ENCODE measurements at regions of chr20 and their contacts with region 1.

Region 1: DNA sequence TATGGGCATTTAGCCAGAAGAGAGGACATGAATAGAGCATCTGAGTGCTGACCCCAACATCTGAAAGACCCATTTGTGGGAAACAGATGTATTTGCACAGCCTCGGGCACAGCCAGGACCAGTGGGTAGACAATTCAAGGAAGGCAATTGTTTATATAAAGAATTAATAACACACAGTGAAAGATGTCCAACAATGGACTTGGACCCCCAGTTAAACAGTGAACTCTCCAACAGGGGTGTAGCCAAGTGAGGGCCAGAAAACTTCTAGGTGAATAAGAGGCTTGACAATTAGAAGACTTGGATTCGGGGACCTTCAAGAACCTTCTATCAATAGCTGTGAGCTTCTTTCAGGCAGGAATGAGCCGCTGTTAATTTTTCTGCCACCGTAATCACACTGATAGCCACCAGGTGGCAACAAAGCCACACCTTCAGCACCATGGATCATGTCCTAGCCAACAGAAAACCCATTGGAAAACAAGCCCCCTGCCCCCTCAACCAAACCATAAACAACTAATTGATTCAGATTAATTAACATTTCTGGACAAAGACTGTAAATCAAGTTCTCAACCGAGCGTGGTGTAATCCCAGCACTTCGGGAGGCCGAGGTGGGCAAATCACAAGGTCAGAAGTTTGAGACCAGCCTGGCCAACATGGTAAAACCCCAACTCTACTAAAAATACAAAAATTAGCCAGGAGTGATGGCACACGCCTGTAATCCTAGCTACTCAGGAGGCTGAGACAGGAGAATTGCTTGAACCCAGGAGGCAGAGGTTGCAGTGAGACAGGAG is 8.8 kb upstream of the SRSF6 start:
- DNase-seq: peak in 1 of 2 experiments; percentile 59
- H3K4me3 ChIP-seq: no peak overlapping the region
- H3K27ac ChIP-seq: no peak overlapping the region
- H3K4me1 ChIP-seq: no peaks in the 10 kb centered on the region
- H3K27me3 ChIP-seq: peaks cover 5% of the 10 kb centered on the region
- CTCF ChIP-seq: peak; percentile 92

Region 2: GRCh38 chr20:43322851-43323250 is 126.1 kb before region 1 on chr20:
- CTCF ChIA-PET with region 1: no interaction called
- POLR2A ChIA-PET with region 1: no interaction called
- intact Hi-C with region 1: no loop called
- DNase-seq: no peak
- H3K4me3 ChIP-seq: no peak overlapping the region
- H3K27ac ChIP-seq: no peak overlapping the region
- H3K4me1 ChIP-seq: no peaks in the 10 kb centered on the region
- H3K27me3 ChIP-seq: peaks cover 65% of the 10 kb centered on the region
- CTCF ChIP-seq: no peak

Region 3: DNA sequence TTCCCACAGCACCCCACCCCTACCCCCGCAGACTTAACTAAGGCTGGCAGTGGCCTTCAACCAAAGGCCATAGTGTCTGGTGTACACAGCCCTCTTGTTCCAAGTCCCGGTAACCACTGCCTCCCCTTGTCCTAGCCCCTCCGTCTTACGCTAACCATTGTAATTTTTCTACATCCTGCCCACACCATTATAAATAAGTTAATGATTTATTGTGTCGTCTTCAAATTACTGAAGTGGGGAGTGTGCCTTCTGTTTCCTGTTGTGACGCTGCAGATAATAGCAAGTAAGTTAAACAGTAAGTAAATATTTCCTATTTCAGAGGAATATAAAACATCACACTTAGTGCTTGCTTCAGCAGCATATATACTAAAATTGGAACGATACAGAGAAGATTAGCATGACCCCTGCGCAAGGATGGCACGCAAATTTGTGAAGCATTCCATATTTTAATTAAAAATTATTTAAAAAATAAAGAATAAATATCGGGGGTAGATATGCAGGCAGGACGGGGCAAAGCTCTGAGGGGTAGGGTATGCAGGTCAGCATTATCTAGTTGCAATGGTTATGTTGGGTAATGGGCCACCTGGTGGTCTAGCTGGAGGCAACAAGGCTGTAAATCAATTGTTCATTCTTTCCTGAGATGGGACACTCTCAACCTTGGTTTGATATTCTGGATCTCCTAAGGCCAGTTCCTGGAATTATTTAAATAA is 23.9 kb after region 1 on chr20:
- CTCF ChIA-PET with region 1: no interaction called
- POLR2A ChIA-PET with region 1: no interaction called
- intact Hi-C with region 1: no loop called
- DNase-seq: no peak
- H3K4me3 ChIP-seq: no peak overlapping the region
- H3K27ac ChIP-seq: no peak overlapping the region
- H3K4me1 ChIP-seq: no peaks in the 10 kb centered on the region
- H3K27me3 ChIP-seq: no peaks in the 10 kb centered on the region
- CTCF ChIP-seq: no peak

Region 4: GRCh38 chr20:43537921-43538877 is 89.3 kb after region 1 on chr20:
- CTCF ChIA-PET with region 1: interaction called, 7 read pairs
- POLR2A ChIA-PET with region 1: interaction called, 3 read pairs
- intact Hi-C with region 1: loop called (anchors 1 kb)
- DNase-seq: peak; percentile 46 to 65
- H3K4me3 ChIP-seq: no peak overlapping the region
- H3K27ac ChIP-seq: no peak overlapping the region
- H3K4me1 ChIP-seq: peaks cover 13% of the 10 kb centered on the region
- H3K27me3 ChIP-seq: no peaks in the 10 kb centered on the region
- CTCF ChIP-seq: peak; percentile 98

Region 5: DNA sequence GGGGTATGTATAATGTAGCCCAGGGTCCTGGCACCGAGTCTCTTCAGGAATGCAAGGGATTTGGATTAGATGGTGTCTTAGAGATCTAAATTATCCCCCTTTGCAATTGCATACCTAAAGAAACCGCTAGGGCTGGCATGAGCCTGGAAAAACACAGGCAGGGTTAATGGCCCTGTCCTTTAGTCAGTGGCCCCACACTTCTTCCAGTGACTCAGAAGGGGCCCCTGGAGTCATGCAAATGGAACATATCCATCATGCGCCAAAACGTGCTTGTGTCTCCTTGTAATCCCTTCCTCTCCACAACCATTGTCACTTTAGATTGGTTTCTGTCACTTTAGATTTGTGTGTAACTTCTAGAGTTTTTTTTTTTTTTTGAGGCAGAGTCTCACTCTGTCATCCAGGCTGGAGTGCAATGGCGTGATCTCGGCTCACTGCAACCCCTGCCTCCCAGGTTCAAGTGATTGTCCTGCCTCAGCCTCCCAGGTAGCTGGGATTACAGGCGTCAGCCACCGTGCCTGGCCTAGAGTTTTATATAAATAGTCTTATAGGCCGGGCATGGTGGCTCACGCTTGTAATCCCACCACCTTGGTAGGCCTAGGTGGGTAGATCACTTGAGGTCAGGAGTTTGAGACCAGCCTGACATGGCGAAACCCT is 209.3 kb after region 1 on chr20:
- CTCF ChIA-PET with region 1: no interaction called
- POLR2A ChIA-PET with region 1: interaction called, 17 read pairs
- intact Hi-C with region 1: no loop called
- DNase-seq: peak; percentile 23 to 67
- H3K4me3 ChIP-seq: peak overlapping the region; percentile 84
- H3K27ac ChIP-seq: peak overlapping the region; percentile 70
- H3K4me1 ChIP-seq: peaks cover 15% of the 10 kb centered on the region
- H3K27me3 ChIP-seq: no peaks in the 10 kb centered on the region
- CTCF ChIP-seq: peak; percentile 20; the same call in 1 of the 2 replicates